HEK293 (cell line): ENCODE measurements at regions of chr15 and their contacts with region 1.

Region 1: DNA sequence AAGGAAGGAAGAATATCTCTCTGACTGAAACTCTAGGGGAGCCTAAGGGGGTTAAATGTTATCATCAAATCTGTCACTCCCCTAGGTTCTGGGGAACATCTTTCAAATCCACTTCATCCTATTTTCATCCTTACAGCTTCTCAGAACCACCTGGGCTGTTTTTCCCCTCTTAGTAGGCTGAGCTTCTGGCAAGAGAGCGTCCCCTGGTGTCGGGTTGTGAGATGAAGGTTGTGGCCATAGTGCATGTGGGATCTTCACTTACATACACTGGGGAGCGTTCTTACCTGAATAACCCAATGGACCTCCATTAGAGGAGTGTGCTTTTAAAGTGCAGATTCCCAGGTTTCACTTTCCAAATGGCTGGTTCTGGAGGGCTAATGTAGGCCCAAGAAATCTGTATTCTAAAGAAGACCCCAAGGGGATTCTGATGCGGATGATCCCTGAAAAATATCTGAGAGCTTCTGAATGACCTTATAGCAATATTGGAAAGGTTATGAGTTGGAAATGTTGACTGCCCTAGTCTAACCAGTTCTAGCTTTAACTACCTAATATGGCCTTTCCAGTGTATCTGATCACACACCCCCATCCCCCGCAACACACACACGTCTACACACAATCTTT is 663.7 kb downstream of the AGBL1 start:
- H3K4me3 ChIP-seq: no peak overlapping the region
- H3K27ac ChIP-seq: no peak overlapping the region
- H3K4me1 ChIP-seq: no peaks in the 10 kb centered on the region; the same call in 1 of the 2 replicates
- CTCF ChIP-seq: no peak

Region 2: DNA sequence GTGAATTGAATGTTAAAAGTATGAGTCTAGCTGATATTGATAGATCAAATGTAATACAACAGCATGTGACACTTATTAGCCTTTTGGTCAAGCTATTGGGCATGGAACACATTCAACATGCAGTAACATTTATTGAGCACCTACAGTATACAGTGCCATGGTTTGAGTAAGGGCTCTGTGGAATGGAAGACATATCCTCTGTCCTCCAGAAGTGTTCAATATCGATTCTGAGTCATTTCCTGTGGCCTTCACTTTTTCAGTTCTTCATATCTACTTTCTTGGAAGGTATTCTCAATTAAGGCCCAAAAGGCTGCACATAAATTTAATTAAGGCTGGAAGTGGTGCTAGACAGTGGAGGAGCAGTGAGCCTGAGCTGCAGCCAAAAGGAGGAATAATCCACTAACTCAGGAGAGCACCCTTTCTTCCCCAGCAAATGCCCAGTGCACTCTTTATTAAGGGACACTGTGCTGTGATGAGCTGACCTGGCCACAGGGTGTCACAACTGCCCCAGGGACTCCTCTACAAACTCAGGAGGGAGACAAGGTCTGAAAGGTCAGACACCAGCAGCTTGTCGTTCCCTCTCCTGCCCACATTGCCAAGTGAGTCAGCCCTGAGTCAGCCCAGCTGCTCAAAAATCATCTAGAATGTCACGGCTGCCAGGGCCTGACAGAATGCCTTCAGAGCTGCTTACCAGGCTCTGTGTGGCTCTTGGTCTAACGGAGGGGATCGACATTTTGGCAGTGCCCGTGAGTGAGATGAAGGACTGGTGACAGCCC is 118.9 kb before region 1 on chr15:
- CTCF ChIA-PET with region 1: interaction called, 29 read pairs
- POLR2A ChIA-PET with region 1: no interaction called
- H3K4me3 ChIP-seq: no peak overlapping the region
- H3K27ac ChIP-seq: no peak overlapping the region
- H3K4me1 ChIP-seq: peaks cover 7% of the 10 kb centered on the region; the same call in 1 of the 2 replicates
- CTCF ChIP-seq: no peak

Region 3: GRCh38 chr15:86725628-86726027 is 17.8 kb before region 1 on chr15:
- CTCF ChIA-PET with region 1: interaction called, 14 read pairs
- POLR2A ChIA-PET with region 1: no interaction called
- H3K4me3 ChIP-seq: no peak overlapping the region
- H3K27ac ChIP-seq: no peak overlapping the region
- H3K4me1 ChIP-seq: no peaks in the 10 kb centered on the region
- CTCF ChIP-seq: no peak

Region 4: GRCh38 chr15:86756692-86757091 is 13.3 kb after region 1 on chr15:
- CTCF ChIA-PET with region 1: interaction called, 42 read pairs
- POLR2A ChIA-PET with region 1: interaction called, 4 read pairs
- H3K4me3 ChIP-seq: no peak overlapping the region
- H3K27ac ChIP-seq: no peak overlapping the region
- H3K4me1 ChIP-seq: peaks cover 5% of the 10 kb centered on the region; the same call in 1 of the 2 replicates
- CTCF ChIP-seq: no peak